ENCODE measurements at regions of chr9 and their contacts with region 1.

Region 1: DNA sequence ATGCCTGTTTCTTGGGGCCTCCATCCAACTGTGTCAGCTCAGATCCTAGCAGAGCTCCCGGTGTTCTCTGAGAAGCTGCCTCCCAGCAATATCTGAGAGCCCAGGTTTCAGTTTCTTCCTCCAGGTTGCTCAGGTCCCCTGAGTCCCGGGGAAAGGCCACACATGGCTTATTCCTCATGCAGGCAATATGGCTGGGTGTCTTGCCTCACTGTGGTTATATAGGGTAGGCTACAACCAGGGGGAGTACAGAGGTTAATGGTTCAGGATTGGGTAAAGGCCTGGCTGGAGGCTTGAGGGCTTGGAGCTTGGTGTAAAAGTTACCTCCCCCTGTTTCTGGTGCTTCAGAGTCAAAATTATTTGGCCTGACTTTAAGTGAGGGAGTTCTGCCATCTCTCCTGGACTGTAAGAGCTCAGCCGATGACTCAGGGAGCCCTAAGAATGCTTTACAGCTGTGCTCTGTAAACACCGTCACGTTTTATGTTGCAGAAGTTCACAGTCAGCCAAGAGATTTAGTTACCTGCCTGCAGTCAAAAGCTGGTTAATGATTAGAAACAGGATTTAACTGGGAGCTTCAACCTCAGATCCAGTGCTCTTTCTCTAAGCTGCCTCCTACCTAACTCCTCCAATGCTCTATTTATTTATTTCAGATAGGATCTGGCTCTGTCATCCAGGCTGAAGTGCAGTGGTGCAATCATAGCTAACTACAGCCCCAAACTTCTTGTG is 24.3 kb upstream of the UBAP2 start:
- DNase-seq: peak; percentile 79
- H3K4me3 ChIP-seq: no peak overlapping the region
- H3K27ac ChIP-seq: no peak overlapping the region
- H3K4me1 ChIP-seq: peaks cover 18% of the 10 kb centered on the region
- H3K27me3 ChIP-seq: no peaks in the 10 kb centered on the region
- CTCF ChIP-seq: no peak

Region 2: GRCh38 chr9:33737811-33738606 is 335.0 kb before region 1 on chr9:
- CTCF ChIA-PET with region 1: no interaction called
- dilution Hi-C with region 1: no loop called
- in situ Hi-C with region 1: no loop called
- intact Hi-C with region 1: loop called (anchors 2 kb)
- DNase-seq: peak; percentile 60
- H3K4me3 ChIP-seq: no peak overlapping the region
- H3K27ac ChIP-seq: no peak overlapping the region
- H3K4me1 ChIP-seq: peaks cover 10% of the 10 kb centered on the region
- H3K27me3 ChIP-seq: no peaks in the 10 kb centered on the region
- CTCF ChIP-seq: peak; percentile 74 to 89

Region 3: DNA sequence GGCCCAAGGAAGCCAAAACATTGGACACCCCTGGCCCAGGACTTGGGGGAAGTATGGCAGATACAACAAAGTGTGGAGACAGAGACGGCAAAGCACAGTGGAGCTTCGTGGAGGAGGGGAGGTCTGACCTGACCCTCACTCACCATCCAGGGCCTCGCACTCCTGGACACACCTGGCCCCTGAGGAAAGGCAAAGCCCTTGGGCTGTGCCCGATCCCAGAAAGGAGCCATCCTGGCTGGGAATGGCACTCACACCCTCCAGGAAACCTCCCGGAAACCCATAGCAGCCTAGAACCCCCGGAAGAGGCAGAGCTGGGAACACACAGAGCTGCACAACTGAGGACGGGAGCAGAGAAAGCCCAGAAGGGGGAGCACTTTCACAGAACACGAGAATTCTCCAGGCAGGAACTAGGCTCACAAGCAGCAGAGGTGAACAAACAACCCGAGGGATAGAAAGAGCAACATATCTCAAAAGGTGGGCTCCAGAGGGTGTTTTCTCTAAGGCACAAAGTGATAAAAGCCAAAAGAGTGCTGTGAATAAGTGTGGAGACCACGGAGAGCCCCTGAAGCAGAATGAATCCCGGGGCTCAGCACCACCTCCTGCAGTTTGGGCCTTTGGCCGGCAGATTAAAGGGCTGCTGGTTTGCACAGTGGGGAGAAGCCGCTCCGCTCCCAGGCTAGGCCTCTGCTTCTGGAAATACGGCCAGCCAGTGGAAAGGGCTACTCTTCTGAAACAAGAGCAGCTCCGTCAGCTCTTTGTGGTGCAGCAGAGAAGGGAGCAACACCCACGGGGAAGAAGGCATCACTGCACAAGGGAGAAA is 147.8 kb before region 1 on chr9:
- CTCF ChIA-PET with region 1: interaction called, 3 read pairs
- dilution Hi-C with region 1: no loop called
- in situ Hi-C with region 1: no loop called
- intact Hi-C with region 1: loop called (anchors 1 kb)
- DNase-seq: no peak
- H3K4me3 ChIP-seq: no peak overlapping the region
- H3K27ac ChIP-seq: no peak overlapping the region
- H3K4me1 ChIP-seq: no peaks in the 10 kb centered on the region
- H3K27me3 ChIP-seq: no peaks in the 10 kb centered on the region
- CTCF ChIP-seq: peak; percentile 32 to 52

Region 4: GRCh38 chr9:34001298-34001697 is 71.7 kb before region 1 on chr9:
- CTCF ChIA-PET with region 1: no interaction called
- dilution Hi-C with region 1: no loop called
- in situ Hi-C with region 1: no loop called
- intact Hi-C with region 1: no loop called
- DNase-seq: no peak
- H3K4me3 ChIP-seq: no peak overlapping the region
- H3K27ac ChIP-seq: no peak overlapping the region
- H3K4me1 ChIP-seq: no peaks in the 10 kb centered on the region
- H3K27me3 ChIP-seq: no peaks in the 10 kb centered on the region
- CTCF ChIP-seq: no peak

Region 5: DNA sequence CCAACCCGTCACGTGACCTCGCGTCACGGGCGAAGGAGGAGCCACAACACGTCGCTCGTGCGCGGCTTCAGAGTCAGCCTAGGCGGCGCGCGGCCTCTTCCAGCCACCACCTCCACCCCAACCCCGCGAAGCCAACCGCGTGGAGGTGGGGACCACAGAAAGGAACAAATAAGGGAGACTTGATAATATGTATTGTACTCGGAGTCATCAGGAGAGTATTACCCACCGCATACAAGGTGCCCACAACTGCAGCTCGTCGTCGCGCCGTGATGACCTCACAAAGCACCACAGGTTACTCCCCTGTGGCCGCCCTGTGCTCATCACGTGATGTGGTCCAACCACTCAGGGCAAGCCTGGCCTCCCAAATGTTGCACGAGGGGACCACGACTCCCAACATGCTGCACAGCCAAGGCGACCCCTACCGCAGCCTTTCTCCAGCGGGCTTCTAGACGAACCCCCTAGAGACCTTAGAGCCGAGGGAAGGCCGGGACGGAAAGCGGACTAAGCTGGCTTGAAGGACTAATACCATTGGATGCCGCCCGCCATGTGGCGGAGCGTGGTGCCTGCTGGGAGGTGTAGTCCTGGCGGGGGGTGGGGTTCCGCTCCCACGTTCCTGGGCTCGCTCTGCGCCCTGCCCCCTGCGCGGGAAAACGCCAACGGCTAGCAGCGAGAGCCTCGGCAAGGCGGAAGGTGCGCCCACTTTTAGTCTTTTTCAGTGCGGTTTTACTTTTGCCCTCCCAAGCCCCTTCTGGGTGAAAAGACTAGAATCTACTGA is 23.9 kb before region 1 on chr9:
- CTCF ChIA-PET with region 1: interaction called, 10 read pairs
- dilution Hi-C with region 1: no loop called
- in situ Hi-C with region 1: no loop called
- intact Hi-C with region 1: loop called (anchors 1 kb)
- DNase-seq: peak; percentile 97
- H3K4me3 ChIP-seq: peak overlapping the region; percentile 49 to 97 (median 82)
- H3K27ac ChIP-seq: peak overlapping the region; percentile 98
- H3K4me1 ChIP-seq: peaks cover 16% of the 10 kb centered on the region
- H3K27me3 ChIP-seq: no peaks in the 10 kb centered on the region
- CTCF ChIP-seq: no peak

Region 6: GRCh38 chr9:34252670-34253459 is 179.8 kb after region 1 on chr9:
- CTCF ChIA-PET with region 1: interaction called, 9 read pairs
- dilution Hi-C with region 1: no loop called
- in situ Hi-C with region 1: no loop called
- intact Hi-C with region 1: loop called (anchors 1 kb)
- DNase-seq: no peak
- H3K4me3 ChIP-seq: no peak overlapping the region
- H3K27ac ChIP-seq: peak overlapping the region; percentile 82
- H3K4me1 ChIP-seq: peaks cover 79% of the 10 kb centered on the region
- H3K27me3 ChIP-seq: no peaks in the 10 kb centered on the region
- CTCF ChIP-seq: peak; percentile 94 to 96

Region 7: GRCh38 chr9:34603610-34604231 is 530.7 kb after region 1 on chr9:
- CTCF ChIA-PET with region 1: no interaction called
- dilution Hi-C with region 1: no loop called
- in situ Hi-C with region 1: no loop called
- intact Hi-C with region 1: loop called (anchors 1 kb)
- DNase-seq: peak; percentile 54
- H3K4me3 ChIP-seq: no peak overlapping the region
- H3K27ac ChIP-seq: no peak overlapping the region
- H3K4me1 ChIP-seq: peaks cover 15% of the 10 kb centered on the region
- H3K27me3 ChIP-seq: no peaks in the 10 kb centered on the region
- CTCF ChIP-seq: peak; percentile 92 to 96

Measured in mammary epithelial cell (primary cell).